Naive thymus-derived CD4-positive, alpha-beta T cell (primary cell): ENCODE measurements at regions of chr13 and their contacts with region 1.

Region 1: DNA sequence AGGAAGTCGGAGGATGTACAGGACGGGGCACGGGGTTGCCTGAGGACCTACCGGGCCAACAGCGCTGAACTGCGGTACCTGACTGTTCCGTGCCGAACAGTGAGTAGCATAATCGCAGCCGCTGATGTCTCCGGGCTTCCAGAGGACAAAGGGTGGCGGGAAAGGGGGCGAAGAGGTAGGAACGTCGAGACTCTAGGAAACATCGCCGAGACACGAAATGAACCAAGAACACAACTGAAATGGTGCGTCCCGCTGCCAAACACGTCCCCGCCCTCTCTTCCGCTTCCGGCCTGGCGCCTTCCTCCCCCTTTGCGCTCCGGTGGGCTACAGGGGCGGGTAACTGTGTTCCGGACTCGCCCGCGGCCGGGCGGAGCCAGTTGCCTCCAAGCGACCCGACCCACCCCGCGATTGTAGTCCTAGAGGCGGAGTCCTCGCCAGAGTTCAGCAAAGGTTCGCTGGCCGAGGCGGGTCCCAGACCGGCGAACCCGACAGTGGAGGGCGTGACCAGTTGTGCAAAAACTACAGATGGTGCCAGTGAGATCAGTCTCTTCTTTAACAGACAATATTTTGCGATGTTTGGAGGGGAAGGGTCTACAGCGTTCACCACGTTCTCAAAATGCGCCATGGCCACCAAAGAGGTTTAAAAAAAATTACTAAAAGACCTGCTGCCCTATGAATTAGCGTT is at the start of gene MRPS31:
- DNase-seq: peak; percentile 89 to 97 (median 93)
- ATAC-seq: peak; percentile 99
- H3K4me3 ChIP-seq: peak within 1 kb of the TSS; percentile 78
- H3K4me3 Mint-ChIP-seq: peak within 1 kb of the TSS; percentile 94 to 100 (median 99)
- H3K27ac ChIP-seq: peak within 1 kb of the TSS; percentile 89
- H3K27ac Mint-ChIP-seq: peak within 1 kb of the TSS; percentile 93 to 100 (median 98)
- H3K4me1 ChIP-seq: peaks cover 15 to 16% of the 10 kb centered on the region in 2 donors
- H3K4me1 Mint-ChIP-seq: peaks cover 16 to 41% (median 33%) of the 10 kb centered on the region in 7 donors
- H3K27me3 ChIP-seq: no peaks in the 10 kb centered on the region
- H3K27me3 Mint-ChIP-seq: no peaks in the 10 kb centered on the region
- total RNA-seq, gene MRPS31: 15.8 to 39.9 (median 34.7) TPM

Region 2: DNA sequence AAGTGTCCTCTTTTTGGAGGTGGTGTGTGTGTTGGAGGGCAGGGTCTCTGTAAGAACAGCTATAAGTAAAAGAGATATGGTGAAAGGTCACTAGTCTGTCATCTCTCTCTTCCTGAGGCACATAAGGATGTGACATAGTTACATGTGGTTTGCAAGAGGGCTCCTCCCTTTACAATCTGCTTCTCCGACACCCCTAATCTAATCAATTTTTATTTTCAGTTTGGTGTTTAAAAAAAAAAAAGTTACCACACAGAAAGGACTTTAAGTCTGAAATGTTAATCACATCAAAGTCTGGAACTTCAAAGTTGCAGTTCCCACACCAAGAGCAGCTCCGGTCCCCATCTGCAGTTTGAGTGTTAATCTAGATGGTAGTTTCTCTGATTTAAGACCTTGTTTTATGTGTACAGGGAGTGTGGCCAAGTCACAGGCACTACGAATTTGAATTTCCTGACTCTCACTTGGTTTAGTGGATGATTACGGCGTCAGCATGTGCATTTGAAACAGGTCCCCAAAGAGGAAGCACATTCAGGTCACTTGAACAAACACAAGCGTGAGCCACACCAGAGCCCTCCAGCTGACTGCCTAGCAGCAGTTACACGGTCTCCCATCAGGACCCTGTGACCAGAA is 157.8 kb before region 1 on chr13:
- CTCF ChIA-PET with region 1: no interaction called
- POLR2A ChIA-PET with region 1: no interaction called
- intact Hi-C with region 1: loop called in 1 of 2 experiments (anchors 1 kb)
- DNase-seq: peak in 8 of 9 donors; percentile 44 to 76 (median 64)
- ATAC-seq: peak; percentile 86
- H3K4me3 ChIP-seq: peak overlapping the region; percentile 26
- H3K4me3 Mint-ChIP-seq: peak overlapping the region; percentile 72 to 88 (median 82)
- H3K27ac ChIP-seq: peak overlapping the region; percentile 72
- H3K27ac Mint-ChIP-seq: peak overlapping the region; percentile 76 to 98 (median 92)
- H3K4me1 ChIP-seq: peaks cover 64 to 83% of the 10 kb centered on the region in 2 donors
- H3K4me1 Mint-ChIP-seq: peaks cover 59 to 100% (median 95%) of the 10 kb centered on the region in 7 donors
- H3K27me3 ChIP-seq: no peaks in the 10 kb centered on the region
- H3K27me3 Mint-ChIP-seq: no peaks in the 10 kb centered on the region

Region 3: DNA sequence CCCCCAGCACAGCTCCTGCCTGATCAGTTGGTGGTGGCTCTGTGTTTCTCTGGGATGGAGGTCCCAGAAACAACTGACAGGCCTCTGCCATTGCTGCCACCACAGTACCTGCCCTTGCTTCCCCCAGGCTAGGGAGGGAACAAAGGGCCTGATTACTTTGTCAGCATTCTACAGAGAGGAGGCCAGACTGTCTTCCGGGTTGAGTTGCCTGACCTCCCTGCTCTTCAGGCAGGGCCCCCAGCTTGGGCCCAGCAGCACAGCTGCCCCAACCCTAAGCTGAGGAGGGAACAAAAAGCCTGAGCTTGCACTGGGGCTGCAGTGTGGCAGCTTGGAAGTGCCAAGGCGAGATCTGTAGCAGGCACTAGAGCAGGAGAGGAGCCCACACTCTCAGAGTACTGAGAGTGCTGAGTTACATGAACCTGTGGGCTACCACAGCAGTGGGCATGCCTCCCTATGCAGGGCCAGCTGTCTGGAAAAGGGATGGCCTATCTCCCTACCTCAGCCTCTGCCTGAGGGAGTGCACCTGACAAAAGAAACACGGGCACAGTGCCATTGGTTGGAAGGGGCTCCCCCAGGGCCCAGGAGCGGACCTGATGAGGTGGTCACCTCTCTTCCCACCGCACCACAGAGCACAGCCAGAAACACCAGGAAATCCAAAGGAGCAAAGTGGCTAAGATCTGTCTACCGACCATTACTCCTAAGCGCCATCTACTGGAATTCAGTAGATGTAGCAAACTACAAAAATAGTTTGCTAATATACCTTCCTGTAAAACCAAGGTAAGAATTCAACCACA is 42.8 kb after region 1 on chr13:
- CTCF ChIA-PET with region 1: no interaction called
- POLR2A ChIA-PET with region 1: no interaction called
- intact Hi-C with region 1: loop called in 1 of 2 experiments (anchors 1 kb)
- DNase-seq: peak in 1 of 9 donors; percentile 29
- ATAC-seq: peak; percentile 67
- H3K4me3 ChIP-seq: no peak overlapping the region
- H3K4me3 Mint-ChIP-seq: no peak overlapping the region
- H3K27ac ChIP-seq: no peak overlapping the region
- H3K27ac Mint-ChIP-seq: no peak overlapping the region
- H3K4me1 ChIP-seq: no peaks in the 10 kb centered on the region
- H3K4me1 Mint-ChIP-seq: peaks cover 0 to 3% (median 0%) of the 10 kb centered on the region in 7 donors
- H3K27me3 ChIP-seq: no peaks in the 10 kb centered on the region
- H3K27me3 Mint-ChIP-seq: no peaks in the 10 kb centered on the region

Region 4: GRCh38 chr13:41193919-41194824 is 423.1 kb after region 1 on chr13 and contains the start of gene KBTBD7:
- CTCF ChIA-PET with region 1: no interaction called
- POLR2A ChIA-PET with region 1: no interaction called
- intact Hi-C with region 1: loop called in 1 of 2 experiments (anchors 2 kb)
- DNase-seq: peak; percentile 78 to 94 (median 83)
- ATAC-seq: peak; percentile 98
- H3K4me3 ChIP-seq: peak within 1 kb of the TSS; percentile 85
- H3K4me3 Mint-ChIP-seq: peak within 1 kb of the TSS; percentile 87 to 98 (median 94)
- H3K27ac ChIP-seq: peak within 1 kb of the TSS; percentile 70
- H3K27ac Mint-ChIP-seq: peak within 1 kb of the TSS; percentile 79 to 94 (median 90)
- H3K4me1 ChIP-seq: peaks cover 0 to 13% of the 10 kb centered on the region in 2 donors
- H3K4me1 Mint-ChIP-seq: peaks cover 25 to 50% (median 41%) of the 10 kb centered on the region in 7 donors
- H3K27me3 ChIP-seq: no peaks in the 10 kb centered on the region
- H3K27me3 Mint-ChIP-seq: no peaks in the 10 kb centered on the region
- total RNA-seq, gene KBTBD7: 2.8 to 12.9 (median 11.5) TPM

Region 5: DNA sequence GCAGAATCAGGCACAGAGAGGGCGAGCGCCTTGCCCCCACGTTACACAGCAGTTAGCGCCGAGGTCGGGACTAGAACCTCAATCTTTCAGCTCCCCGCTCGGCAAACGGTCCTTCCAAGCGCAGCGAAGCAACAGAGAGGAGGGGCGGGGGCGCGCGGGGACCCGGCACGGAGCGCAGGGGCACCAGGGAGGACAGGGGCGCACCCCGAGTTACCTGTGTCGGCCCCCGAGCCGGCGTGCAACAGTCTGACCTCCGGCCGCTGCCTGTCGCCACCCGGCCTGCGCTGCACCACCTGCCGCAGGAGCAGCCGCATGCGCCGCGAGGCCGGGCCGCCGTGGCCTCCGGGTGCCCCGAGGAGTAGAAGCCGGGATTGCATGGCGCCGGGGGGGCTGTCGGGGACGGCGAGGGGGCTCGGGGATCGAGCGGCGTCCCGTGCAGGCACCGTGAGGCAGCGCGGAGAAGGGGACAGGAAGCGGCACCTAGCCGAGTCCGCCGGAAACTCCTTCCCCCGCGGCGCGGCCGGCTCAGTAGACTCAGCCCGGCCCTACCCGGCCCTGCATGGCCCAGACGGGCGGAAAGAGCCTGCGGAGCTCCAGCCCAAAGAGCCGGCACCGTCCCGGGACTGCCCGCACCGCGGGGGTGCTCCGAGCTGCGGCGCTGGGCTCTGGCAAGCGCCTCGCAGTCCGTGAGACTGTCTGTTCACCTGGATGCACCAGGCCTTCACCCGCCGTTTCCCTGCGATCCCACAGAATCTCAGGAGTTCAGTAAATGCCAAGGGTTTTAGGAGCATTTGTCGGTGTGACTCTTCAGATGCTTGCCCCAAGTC is 1189.8 kb after region 1 on chr13 and contains the start of gene VWA8:
- CTCF ChIA-PET with region 1: no interaction called
- POLR2A ChIA-PET with region 1: no interaction called
- intact Hi-C with region 1: loop called in 1 of 2 experiments (anchors 2 kb)
- DNase-seq: peak; percentile 75 to 86 (median 84)
- ATAC-seq: peak; percentile 97
- H3K4me3 ChIP-seq: peak within 1 kb of the TSS; percentile 86
- H3K4me3 Mint-ChIP-seq: peak within 1 kb of the TSS; percentile 92 to 97 (median 94)
- H3K27ac ChIP-seq: peak within 1 kb of the TSS; percentile 84
- H3K27ac Mint-ChIP-seq: peak within 1 kb of the TSS; percentile 88 to 99 (median 95)
- H3K4me1 ChIP-seq: peaks cover 14 to 16% of the 10 kb centered on the region in 2 donors
- H3K4me1 Mint-ChIP-seq: peaks cover 19 to 63% (median 43%) of the 10 kb centered on the region in 7 donors
- H3K27me3 ChIP-seq: no peaks in the 10 kb centered on the region
- H3K27me3 Mint-ChIP-seq: peaks cover 0 to 2% (median 0%) of the 10 kb centered on the region in 5 donors
- total RNA-seq, gene VWA8: 16.8 to 26.3 (median 21.8) TPM